ENCODE measurements at regions of chr12 and their contacts with region 1.

Region 1: DNA sequence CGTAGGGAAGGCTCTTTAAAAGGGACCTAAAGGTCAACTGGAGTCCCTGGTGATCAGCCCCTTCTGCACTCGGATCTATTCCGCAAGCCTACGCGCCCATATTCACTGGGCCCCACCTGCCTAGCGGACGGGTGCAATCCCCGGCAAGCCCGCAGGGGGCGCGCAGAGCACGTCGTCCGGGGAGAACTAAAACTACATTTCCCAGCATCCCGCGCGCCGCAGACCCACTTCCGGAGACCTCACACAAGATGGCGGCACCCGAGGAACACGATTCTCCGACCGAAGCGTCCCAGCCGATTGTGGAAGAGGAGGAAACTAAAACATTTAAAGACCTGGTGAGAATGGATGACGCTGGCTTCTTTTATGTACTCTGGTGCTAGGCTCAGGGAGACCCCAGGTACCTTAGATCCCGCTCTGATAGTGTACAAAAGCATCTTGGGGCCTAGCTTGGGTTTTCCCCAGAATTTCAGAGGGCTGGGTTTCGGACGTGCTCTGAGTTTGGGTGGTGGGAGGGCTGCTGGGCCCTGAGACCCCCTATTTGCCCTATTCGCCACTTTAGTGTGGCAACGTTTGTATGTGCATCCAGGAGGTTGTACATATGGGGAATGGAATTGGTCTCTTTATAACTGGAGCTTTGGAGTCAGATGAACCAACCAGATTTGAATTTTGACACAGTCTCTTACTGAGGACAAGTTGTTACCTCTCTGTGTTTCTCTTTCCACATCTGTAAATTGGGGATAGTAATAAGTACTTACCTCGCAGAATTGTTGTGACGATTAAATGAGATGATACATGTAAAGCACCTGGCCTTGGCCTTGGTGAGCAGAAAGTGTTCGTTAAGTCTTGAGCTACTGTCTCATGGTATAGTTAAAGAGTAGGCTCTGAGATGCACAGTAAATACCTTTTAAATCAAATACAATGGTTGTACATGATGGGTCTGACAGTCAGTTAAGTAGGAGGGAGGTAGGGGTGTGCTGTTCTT is at the start of gene DDX47:
- DNase-seq: peak; percentile 94 to 99 (median 96)
- ATAC-seq: peak; percentile 88
- H3K4me3 ChIP-seq: peak within 1 kb of the TSS; percentile 88 to 98
- H3K4me3 Mint-ChIP-seq: peak within 1 kb of the TSS; percentile 95
- H3K27ac ChIP-seq: peak within 1 kb of the TSS; percentile 78 to 91
- H3K27ac Mint-ChIP-seq: peak within 1 kb of the TSS; percentile 96
- H3K4me1 ChIP-seq: peaks cover 34% of the 10 kb centered on the region
- H3K4me1 Mint-ChIP-seq: peaks cover 65% of the 10 kb centered on the region
- H3K27me3 ChIP-seq: no peaks in the 10 kb centered on the region
- H3K27me3 Mint-ChIP-seq: no peaks in the 10 kb centered on the region
- CTCF ChIP-seq: peak; percentile 93
- total RNA-seq, gene DDX47: 173 to 174 TPM

Region 2: GRCh38 chr12:12716793-12717585 is 96.4 kb before region 1 on chr12 and contains the start of gene CDKN1B:
- CTCF ChIA-PET with region 1: no interaction called
- POLR2A ChIA-PET with region 1: no interaction called
- intact Hi-C with region 1: loop called in 1 of 2 experiments (anchors 5 kb)
- DNase-seq: peak; percentile 76 to 93 (median 86)
- ATAC-seq: peak; percentile 62
- H3K4me3 ChIP-seq: peak within 1 kb of the TSS; percentile 95 to 96
- H3K4me3 Mint-ChIP-seq: peak within 1 kb of the TSS; percentile 98
- H3K27ac ChIP-seq: peak within 1 kb of the TSS; percentile 93 to 97
- H3K27ac Mint-ChIP-seq: peak within 1 kb of the TSS; percentile 98
- H3K4me1 ChIP-seq: peaks cover 47% of the 10 kb centered on the region
- H3K4me1 Mint-ChIP-seq: peaks cover 66% of the 10 kb centered on the region
- H3K27me3 ChIP-seq: no peaks in the 10 kb centered on the region
- H3K27me3 Mint-ChIP-seq: no peaks in the 10 kb centered on the region
- CTCF ChIP-seq: no peak
- total RNA-seq, gene CDKN1B: 240 to 245 TPM

Region 3: GRCh38 chr12:12803186-12803585 is 10.2 kb before region 1 on chr12:
- CTCF ChIA-PET with region 1: interaction called, 10 read pairs
- POLR2A ChIA-PET with region 1: interaction called, 11 read pairs
- intact Hi-C with region 1: no loop called
- DNase-seq: peak in 5 of 9 experiments; percentile 28 to 46 (median 38)
- ATAC-seq: peak; percentile 35
- H3K4me3 ChIP-seq: no peak overlapping the region
- H3K4me3 Mint-ChIP-seq: no peak overlapping the region
- H3K27ac ChIP-seq: no peak overlapping the region
- H3K27ac Mint-ChIP-seq: peak overlapping the region; percentile 73
- H3K4me1 ChIP-seq: peaks cover 22% of the 10 kb centered on the region
- H3K4me1 Mint-ChIP-seq: peaks cover 41% of the 10 kb centered on the region
- H3K27me3 ChIP-seq: no peaks in the 10 kb centered on the region
- H3K27me3 Mint-ChIP-seq: no peaks in the 10 kb centered on the region
- CTCF ChIP-seq: no peak

Region 4: GRCh38 chr12:13044002-13044905 is 230.8 kb after region 1 on chr12 and contains the start of gene FAM234B:
- CTCF ChIA-PET with region 1: no interaction called
- POLR2A ChIA-PET with region 1: no interaction called
- intact Hi-C with region 1: loop called in 1 of 2 experiments (anchors 1 kb)
- DNase-seq: peak; percentile 44 to 84 (median 71)
- ATAC-seq: peak; percentile 96
- H3K4me3 ChIP-seq: peak within 1 kb of the TSS; percentile 69 to 96
- H3K4me3 Mint-ChIP-seq: peak within 1 kb of the TSS; percentile 86
- H3K27ac ChIP-seq: peak within 1 kb of the TSS in 1 of 2 experiments; percentile 56
- H3K27ac Mint-ChIP-seq: peak within 1 kb of the TSS; percentile 63
- H3K4me1 ChIP-seq: peaks cover 5% of the 10 kb centered on the region
- H3K4me1 Mint-ChIP-seq: peaks cover 21% of the 10 kb centered on the region
- H3K27me3 ChIP-seq: no peaks in the 10 kb centered on the region
- H3K27me3 Mint-ChIP-seq: no peaks in the 10 kb centered on the region
- CTCF ChIP-seq: peak; percentile 13
- total RNA-seq, gene FAM234B: 2.2 to 2.7 TPM

Region 5: GRCh38 chr12:13173012-13173932 is 359.9 kb after region 1 on chr12:
- CTCF ChIA-PET with region 1: no interaction called
- POLR2A ChIA-PET with region 1: no interaction called
- intact Hi-C with region 1: loop called in 1 of 2 experiments (anchors 10 kb)
- DNase-seq: peak in 1 of 9 experiments; percentile 7
- ATAC-seq: peak; percentile 23
- H3K4me3 ChIP-seq: no peak overlapping the region
- H3K4me3 Mint-ChIP-seq: no peak overlapping the region
- H3K27ac ChIP-seq: no peak overlapping the region
- H3K27ac Mint-ChIP-seq: no peak overlapping the region
- H3K4me1 ChIP-seq: no peaks in the 10 kb centered on the region
- H3K4me1 Mint-ChIP-seq: peaks cover 2% of the 10 kb centered on the region
- H3K27me3 ChIP-seq: no peaks in the 10 kb centered on the region
- H3K27me3 Mint-ChIP-seq: no peaks in the 10 kb centered on the region
- CTCF ChIP-seq: no peak

Region 6: DNA sequence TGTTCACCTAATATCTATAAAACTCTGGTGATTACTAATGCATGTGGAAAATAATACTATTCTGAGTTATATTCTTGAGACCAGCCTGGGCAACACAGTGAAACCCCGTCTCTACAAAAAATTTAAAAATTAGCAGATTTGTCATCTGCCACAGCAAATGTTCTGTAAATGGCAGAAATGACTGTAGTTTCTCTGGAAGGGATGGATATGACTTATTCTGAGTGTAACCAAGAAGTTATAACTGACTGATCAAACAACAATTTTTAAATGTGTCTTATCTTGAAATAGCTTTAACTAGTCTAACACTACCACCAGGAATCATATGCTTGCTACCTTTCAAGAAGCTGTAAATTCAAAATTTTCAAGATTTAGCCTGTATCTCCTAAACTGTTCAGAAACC is 1665.6 kb after region 1 on chr12:
- CTCF ChIA-PET with region 1: no interaction called
- POLR2A ChIA-PET with region 1: no interaction called
- intact Hi-C with region 1: no loop called
- DNase-seq: no peak
- ATAC-seq: no peak
- H3K4me3 ChIP-seq: no peak overlapping the region
- H3K4me3 Mint-ChIP-seq: no peak overlapping the region
- H3K27ac ChIP-seq: no peak overlapping the region
- H3K27ac Mint-ChIP-seq: no peak overlapping the region
- H3K4me1 ChIP-seq: no peaks in the 10 kb centered on the region
- H3K4me1 Mint-ChIP-seq: peaks cover 9% of the 10 kb centered on the region
- H3K27me3 ChIP-seq: no peaks in the 10 kb centered on the region
- H3K27me3 Mint-ChIP-seq: no peaks in the 10 kb centered on the region
- CTCF ChIP-seq: no peak